ENCODE measurements at regions of chr3 and their contacts with region 1.

Region 1: DNA sequence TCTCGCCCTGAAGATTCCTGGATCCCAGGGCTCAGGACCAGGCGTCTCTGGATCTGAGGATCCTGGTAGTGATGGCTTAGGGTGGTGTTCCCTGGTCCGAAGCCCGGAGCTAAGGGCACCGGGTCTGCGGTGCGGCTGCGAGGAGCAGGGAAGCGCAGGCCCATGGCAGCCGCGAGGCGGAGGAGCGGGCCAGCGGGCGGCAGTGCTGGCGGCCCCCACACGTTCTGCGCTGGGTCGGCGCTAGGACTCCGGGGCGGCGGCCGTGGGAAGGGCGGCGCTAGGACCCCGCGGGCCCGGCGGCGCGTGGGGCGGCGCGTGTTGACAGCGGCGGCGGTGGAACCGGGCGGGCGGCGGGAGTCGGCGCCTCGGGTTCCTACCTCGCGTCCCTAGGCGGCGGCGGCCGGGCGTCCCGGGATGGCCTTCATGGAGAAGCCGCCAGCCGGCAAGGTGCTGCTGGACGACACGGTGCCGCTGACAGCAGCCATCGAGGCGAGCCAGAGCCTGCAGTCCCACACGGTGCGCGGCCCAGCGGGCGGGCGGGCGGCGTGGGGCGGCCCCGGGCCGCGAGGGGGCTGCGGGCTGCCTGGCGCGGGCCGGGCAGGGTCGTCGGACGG is at the start of gene PXK:
- DNase-seq: peak; percentile 67 to 96 (median 92)

Region 2: DNA sequence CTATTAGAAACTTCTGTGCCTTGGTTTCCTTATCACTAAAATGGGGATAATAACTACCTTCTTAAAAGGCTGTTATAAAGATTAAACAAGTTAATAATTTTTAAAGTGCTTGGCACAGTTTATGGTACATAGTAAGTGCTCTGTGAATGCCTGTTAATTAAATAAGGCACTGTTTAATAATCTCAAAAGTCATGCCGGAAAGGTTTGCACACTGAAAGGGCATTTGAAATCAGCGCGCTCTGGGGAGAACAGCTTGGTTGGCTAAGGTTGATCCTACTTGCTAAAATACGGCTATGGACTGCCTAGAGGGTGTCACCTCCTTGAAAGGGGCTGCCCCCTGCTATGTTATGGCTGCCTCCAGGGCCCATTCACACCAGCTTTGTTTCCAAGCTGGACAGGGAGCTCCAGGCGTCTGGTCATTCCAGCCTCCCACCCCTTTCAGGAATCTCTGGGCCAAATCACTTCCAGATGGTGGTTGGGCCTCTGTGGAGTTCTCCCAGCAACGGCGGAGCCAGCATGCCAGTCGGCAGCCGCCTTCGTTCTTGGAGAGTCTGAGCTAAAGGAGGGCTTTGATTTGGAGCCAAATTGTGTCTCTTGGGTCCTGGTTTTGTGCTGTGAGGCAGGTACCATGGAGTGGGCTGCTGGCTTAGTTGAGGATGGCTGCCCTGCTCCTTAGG is 318.6 kb before region 1 on chr3:
- intact Hi-C with region 1: no loop called
- DNase-seq: peak in 10 of 42 donors; percentile 26 to 57 (median 39)

Region 3: DNA sequence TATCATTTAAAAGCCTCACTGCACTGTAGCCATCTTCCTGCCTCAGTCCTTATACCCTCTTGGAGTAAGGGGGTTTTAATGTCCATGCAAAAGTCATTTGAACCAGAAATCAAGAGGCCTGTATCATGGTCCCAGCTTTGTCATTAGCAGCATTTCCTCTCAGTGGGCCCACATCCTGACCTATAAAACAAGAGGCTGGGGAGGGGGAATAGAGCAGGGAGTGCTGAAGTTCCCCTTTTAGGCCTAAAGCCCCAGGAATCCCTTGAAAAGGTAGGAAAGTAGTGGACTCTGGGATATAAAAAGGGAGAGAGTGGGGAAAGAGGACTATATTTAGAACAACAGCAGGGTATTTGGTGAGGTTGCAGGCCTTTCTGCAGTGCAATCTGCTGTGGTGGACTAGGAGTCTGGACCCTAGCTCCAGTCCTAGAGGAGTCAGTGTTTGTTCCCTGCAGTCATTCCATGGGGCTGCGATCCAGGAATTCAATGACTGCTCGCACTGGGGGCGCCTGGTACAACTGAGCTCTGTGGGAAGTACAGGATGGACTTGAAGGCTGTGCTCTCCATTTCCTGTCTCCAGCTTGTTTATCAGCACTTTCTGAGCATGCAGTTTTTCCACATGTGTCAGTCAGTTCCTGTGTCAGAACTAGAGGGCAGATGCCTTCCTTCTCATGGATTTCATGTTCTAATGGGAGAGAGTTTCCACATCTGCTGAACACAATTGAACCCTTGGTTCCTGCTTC is 54.1 kb after region 1 on chr3:
- intact Hi-C with region 1: loop called (anchors 5 kb)
- DNase-seq: peak; percentile 55 to 94 (median 84)

Region 4: DNA sequence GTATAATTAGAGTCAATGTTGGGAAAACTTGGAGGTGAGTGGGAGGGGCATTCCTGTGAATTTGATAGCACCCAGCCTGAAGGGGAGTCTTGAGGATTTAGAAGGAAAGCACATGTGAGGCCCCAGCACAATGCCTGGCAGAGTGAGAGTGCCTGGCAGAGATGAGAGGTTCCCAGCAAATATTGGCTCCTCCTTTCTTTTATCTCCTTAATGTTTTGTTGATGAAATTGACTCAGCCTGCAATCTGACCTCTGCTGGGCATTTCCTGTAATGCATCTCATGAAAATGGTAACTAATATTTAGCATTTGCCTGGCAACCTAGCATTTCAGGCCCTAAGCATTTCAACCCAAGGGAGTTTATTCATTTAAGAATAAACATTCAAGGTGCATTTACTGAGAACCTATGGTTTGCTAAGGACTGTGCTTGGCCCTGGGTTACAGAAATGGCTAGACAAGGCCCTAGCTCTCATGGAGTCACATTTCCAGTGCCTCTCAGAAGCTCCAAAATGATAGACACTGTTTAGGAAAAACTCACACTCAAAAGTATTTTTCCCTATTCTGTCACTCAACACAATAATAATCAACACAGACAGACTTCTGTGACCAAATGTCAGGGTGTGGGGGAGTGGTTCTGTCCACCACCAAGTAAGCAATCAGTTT is 82.0 kb after region 1 on chr3:
- intact Hi-C with region 1: loop called (anchors 5 kb)
- DNase-seq: peak in 28 of 42 donors; percentile 23 to 84 (median 48)

Region 5: DNA sequence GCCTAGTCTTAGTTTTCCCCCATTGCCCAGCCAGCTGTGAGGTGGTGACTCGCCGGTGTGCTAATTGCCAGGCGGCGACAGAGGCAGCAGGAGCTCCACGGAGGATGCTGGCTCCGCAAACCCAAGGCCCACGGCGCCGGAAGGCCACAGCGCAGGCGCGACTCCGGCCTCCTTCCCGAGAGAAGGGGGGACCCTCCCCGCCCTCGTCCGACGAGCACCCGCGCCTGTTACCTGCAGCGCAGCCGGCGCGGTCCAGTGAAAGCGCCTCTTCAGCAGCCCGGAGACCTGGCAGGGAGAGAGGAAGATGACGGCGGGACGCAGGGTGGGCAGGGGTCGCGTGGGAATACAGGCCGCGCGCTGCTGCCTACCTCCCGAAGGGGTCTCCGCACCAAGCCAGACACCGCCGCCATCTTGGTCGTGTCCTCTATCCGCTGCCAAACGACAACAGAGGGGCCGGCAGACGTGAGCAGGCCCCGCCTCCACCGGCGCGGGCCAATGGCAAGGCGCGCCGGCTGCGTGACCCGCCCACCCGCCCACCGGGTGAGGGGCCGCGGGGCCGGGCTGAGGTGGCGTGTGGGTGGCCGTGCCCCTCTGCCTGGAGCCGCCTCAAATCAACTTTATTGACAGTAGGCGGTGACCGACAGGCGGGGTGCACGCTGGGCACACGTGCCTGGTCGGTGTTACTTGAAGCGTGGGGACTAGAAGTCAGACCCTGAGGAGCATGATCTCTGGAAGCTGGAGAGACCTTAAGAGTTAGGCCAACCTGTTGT is 100.9 kb after region 1 on chr3 and contains the start of gene PDHB:
- intact Hi-C with region 1: loop called (anchors 5 kb)
- DNase-seq: peak; percentile 82 to 97 (median 92)

Region 6: GRCh38 chr3:58491506-58492402 is 159.1 kb after region 1 on chr3 and contains the start of gene KCTD6:
- intact Hi-C with region 1: loop called (anchors 5 kb)
- DNase-seq: peak; percentile 67 to 95 (median 90)

Measured in head of caudate nucleus (tissue), 42 donors.